B cell (primary cell): ENCODE measurements at regions of chr16 and their contacts with region 1.

Region 1: GRCh38 chr16:81158964-81159363 is 62.8 kb upstream of the GCSH start:
- DNase-seq: no peak
- ATAC-seq: no peak
- H3K4me3 ChIP-seq: no peak overlapping the region
- H3K4me3 Mint-ChIP-seq: no peak overlapping the region
- H3K27ac ChIP-seq: no peak overlapping the region
- H3K27ac Mint-ChIP-seq: no peak overlapping the region
- H3K4me1 ChIP-seq: no peaks in the 10 kb centered on the region
- H3K4me1 Mint-ChIP-seq: no peaks in the 10 kb centered on the region
- H3K27me3 ChIP-seq: no peaks in the 10 kb centered on the region
- H3K27me3 Mint-ChIP-seq: no peaks in the 10 kb centered on the region
- CTCF ChIP-seq: no peak

Region 2: GRCh38 chr16:81174654-81175571 is 15.9 kb after region 1 on chr16:
- CTCF ChIA-PET with region 1: no interaction called
- POLR2A ChIA-PET with region 1: interaction called, 11 read pairs
- intact Hi-C with region 1: no loop called
- DNase-seq: no peak
- ATAC-seq: no peak
- H3K4me3 ChIP-seq: no peak overlapping the region
- H3K4me3 Mint-ChIP-seq: no peak overlapping the region
- H3K27ac ChIP-seq: no peak overlapping the region
- H3K27ac Mint-ChIP-seq: no peak overlapping the region
- H3K4me1 ChIP-seq: no peaks in the 10 kb centered on the region
- H3K4me1 Mint-ChIP-seq: no peaks in the 10 kb centered on the region
- H3K27me3 ChIP-seq: peaks cover 0 to 4% (median 0%) of the 10 kb centered on the region in 4 experiments
- H3K27me3 Mint-ChIP-seq: peaks cover 6% of the 10 kb centered on the region
- CTCF ChIP-seq: no peak